ENCODE measurements at regions of chr22 and their contacts with region 1.

Region 1: DNA sequence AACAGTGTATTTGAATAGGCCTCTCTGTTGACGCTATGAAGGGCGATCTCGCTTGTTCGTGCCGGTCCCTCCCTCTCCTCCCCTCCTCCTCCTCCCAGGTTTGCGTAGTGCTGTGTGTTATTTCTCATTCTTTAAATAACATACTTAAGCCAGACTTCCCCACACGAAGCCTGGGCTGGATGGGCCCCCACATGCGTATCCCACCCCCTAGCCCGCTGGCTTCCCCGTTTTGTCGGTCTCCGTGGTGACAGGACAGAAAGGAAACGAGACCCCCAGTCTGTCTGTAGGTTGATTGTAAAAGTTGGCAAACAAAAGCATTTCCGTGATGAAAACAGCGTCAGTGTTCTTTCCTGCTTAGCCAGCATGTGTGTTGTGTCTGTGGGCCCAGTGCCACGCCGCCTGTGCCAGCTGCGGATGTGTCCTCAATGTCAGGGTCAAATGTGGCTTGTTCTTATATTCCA is 27.3 kb downstream of the FAM118A start:
- DNase-seq: peak; percentile 89

Region 2: DNA sequence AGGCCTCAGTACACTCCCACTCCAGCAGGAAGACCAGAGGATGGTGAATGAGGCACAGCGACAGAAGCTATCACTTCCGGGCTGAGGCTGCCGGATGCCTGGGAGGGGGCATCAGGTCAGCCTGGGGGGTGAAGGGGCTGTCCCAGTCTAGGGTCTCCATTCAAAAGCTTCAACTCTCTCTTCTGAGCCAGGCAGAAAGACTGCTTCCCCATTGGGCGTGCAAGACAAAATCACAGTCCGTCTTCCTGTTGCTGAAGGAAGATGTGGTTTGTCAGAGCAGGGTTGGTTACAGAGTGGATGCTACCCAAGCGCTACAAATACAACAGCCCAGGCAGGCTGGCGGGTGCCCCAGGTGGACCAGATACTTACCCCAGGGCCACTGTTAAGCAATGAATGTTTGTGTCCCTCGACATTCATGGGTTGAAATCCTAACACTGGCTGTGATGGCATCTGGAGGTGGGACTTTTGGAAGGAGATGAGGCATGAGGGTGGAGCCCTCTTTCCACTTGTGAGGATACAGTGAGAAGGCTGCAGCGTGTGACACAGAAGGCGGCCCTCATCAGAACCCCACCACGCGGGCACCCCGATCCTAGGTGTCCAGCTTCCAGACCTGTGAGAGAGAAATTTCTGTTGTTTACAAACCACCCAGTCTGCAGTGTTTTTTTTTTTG is 40.2 kb before region 1 on chr22:
- intact Hi-C with region 1: no loop called
- DNase-seq: no peak

Region 3: DNA sequence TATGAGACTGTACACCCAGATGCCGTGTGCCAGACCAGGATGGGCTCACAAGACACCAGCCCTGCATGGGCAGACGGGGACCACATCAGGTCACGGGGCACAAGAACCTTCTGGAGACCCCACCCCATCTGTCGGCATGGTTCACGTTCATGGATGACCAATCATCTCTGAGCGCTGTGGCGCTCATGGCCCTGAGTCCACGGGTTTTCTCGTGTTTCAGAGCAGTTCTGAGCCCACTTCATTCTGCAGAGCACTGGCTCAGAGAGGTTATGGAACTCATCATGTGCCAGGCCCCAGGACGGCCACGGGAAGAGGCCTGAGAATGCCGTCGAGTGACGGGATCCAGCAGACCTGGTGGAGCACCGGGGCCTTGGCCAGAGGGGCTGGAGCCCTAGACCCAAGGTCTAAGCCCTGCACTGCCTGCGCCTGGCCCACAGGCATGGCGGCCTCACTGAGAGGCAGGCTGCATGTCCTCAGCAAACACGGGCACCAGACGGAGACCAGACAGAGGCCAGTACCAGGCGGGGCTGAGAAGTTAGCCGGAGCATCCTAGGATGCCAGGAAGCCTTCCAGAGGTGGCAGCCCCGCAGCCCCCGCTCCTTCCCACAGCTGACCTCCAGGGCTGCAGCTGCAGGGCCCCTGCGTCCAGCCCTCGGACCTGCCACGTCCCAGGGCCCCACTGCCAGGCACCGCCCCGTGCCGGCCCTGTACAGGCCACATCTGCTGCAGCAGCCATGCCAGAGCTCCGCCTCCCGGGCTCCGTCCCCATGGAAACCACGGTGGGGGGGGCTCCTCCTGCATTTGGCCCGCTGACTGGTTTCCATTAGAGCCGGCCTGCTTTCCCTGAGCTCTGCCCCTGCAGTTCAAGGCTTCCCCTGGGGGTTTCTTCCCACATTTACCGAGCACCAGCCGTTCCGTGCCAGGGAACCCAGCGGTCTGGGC is 750.6 kb after region 1 on chr22:
- intact Hi-C with region 1: loop called in 1 of 2 experiments (anchors 10 kb)
- DNase-seq: peak; percentile 97

Region 4: GRCh38 chr22:46171940-46172339 is 834.9 kb after region 1 on chr22:
- intact Hi-C with region 1: no loop called
- DNase-seq: no peak

Measured in posterior vena cava (tissue), 2 donors.